Upper lobe of right lung (tissue), 1 donor: ENCODE measurements at regions of chr19 and their contacts with region 1.

Region 1: DNA sequence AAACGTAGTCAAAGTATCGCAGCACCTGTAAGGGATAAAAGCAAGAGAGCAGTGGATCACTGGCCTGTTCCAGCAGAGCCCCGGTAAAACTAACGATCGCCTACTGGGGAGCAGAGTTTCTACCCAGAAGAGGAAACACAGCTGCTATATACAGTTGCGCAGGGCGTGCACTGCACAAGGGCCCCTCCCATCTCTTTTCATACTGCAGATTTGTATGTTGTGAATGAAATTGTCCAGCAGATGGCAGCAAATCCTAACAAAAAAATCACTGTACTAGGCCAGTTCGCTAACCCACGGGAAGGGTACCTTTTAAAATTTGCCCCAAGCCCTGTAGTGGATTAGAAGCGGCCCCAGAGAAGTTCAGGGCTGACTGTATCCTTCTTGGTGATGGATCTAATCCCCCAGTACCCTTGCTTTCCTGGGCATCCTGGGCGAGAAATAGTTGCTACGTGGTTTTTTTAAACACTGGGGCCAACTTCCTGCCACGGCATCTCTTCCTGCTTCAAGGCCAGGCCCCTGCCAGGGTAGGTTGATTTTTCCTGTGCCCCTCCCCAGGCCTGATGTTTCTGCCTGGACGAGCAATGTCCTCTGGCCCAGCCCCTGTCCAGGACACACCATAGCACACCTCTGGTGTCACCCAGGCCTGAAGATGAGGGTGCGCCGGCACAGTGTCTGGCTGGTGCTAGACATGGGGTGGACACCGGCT is 127.0 kb downstream of the IER2 start:
- DNase-seq: no peak
- ATAC-seq: peak; percentile 93
- H3K4me3 ChIP-seq: no peak overlapping the region
- H3K27ac ChIP-seq: no peak overlapping the region
- H3K4me1 ChIP-seq: peaks cover 8% of the 10 kb centered on the region
- H3K27me3 ChIP-seq: peaks cover 6% of the 10 kb centered on the region
- CTCF ChIP-seq: peak; percentile 67

Region 2: DNA sequence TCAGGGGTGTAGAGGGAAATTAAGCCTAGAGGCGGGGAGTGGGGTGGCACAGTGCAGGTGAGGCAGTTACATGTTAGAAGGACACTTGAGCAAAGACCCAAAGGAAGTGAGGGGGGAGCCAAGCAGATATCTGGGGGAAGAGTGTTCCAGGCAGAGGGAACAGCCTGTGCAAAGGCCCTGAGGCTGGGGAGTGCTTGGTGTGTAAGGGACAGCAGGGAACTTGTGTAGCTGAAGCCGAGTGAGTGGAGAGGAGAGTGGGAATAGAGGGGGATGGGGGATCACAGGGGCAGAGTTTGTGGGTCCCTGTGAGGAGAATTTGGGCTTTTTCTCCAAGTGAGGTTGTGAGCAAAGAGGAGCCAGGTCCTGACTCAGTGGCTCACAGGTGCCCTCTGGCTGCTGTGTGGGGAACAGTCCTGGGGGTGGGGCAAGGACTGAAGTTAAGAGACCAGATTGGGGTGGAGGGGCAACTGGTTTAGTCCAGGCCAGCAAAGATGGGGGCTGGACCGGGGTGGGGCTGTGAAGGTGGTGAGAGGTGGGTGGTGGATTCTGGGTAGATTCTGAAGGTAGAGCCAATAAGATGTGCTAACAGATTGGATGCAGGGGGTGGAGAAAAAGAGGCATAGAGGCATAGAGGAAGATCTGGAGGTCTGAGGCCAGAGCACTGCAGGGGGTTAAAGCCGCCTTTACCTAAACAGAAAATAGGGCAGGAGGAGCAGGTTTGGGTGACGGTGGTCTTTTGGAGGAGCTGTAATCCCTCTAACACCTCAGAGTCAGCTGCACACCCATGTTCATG is 153.7 kb after region 1 on chr19:
- intact Hi-C with region 1: loop called (anchors 10 kb)
- DNase-seq: peak; percentile 71
- ATAC-seq: peak; percentile 76
- H3K4me3 ChIP-seq: no peak overlapping the region
- H3K27ac ChIP-seq: no peak overlapping the region
- H3K4me1 ChIP-seq: no peaks in the 10 kb centered on the region
- H3K27me3 ChIP-seq: no peaks in the 10 kb centered on the region
- CTCF ChIP-seq: peak; percentile 59

Region 3: DNA sequence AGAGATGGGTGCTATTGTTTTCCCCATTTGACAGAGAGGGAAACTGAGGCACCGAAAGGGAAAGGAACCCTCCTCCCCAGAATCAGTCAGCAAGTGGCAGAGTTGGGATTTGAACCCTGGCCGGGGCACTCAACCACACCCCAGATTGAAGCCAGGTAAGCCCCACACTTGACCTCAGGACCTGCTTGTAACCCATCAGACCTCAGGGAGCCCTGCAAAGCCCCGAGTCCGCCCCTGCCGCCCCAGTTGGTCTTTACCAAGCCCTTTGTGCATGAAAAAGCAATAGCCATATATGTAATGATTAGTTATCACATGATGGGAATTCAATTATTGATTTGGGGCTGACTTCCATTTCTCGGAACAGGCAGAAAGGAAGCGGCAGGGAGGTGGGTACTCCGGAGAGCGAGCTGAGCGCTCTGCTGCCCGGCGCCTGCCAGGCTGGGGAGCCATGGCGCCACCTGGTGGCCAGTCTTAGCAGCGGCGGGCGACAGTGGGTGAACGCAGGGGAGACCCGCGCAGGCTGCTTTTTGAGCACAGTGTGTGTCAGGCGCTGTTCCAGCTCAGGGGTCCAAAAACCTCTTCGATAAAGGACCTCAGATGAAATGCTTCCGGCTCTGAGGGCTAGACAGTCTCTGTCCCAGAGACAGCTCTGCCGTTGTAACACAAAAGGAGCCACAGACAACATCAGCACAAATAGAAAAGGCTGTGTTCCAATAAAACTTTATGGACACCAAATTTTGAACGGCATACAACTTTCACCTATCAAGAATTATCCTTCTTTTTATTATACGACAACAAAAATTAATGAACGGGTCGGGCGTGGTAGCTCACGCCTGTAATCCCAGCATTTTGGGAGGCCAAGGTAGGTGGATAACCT is 311.9 kb after region 1 on chr19:
- intact Hi-C with region 1: loop called (anchors 5 kb)
- DNase-seq: peak; percentile 86
- ATAC-seq: peak; percentile 98
- H3K4me3 ChIP-seq: no peak overlapping the region
- H3K27ac ChIP-seq: no peak overlapping the region
- H3K4me1 ChIP-seq: no peaks in the 10 kb centered on the region
- H3K27me3 ChIP-seq: peaks cover 15% of the 10 kb centered on the region
- CTCF ChIP-seq: peak; percentile 100